GM12878 (cell line): ENCODE measurements at regions of chr16 and their contacts with region 1.

Region 1: GRCh38 chr16:57591086-57591869 is 37.2 kb upstream of the ADGRG1 start:
- DNase-seq: no peak
- ATAC-seq: peak; percentile 88
- H3K4me3 ChIP-seq: no peak overlapping the region
- H3K27ac ChIP-seq: no peak overlapping the region
- H3K4me1 ChIP-seq: peaks cover 23% of the 10 kb centered on the region
- H3K27me3 ChIP-seq: no peaks in the 10 kb centered on the region
- CTCF ChIP-seq: peak; percentile 91 to 94 (median 94)
- EP300 ChIP-seq: peak; percentile 62 to 68; a peak in 2 of 4 replicates
- POLR2A ChIP-seq: 0 out of 2 replicates have a peak, but pooled peaks have one; percentile 27
- RAD21 ChIP-seq: peak; percentile 76

Region 2: DNA sequence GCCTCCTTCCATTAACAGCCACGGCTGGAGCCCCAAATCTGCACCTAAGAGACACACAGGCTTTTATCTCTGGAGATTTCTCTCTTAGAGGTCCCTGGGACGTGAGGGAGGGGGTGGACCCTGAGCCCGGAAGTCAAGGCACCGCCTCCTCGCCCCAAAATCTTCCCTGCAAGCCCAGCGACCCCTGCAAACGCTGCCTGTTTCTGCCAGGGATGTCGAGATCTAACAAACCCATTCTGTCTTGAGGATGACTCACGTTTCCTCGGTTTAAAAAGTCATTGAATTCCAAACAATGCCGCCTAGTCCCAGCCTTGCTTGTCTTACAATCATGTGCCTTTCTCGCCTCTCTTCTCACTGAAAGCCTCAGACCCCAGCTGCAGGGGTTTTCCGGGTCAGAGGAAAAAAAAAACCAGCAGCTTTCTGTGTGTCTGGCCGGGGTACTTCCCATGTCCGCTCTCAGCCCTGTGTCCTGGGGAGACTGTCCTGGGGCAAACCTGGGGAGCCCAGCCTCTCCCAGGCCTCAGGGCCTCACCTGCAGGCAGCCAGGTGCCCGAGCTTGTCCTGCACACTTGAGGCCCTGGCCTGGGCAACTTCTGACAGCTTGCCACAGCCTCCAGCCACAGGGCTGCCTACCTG is 330.9 kb before region 1 on chr16:
- CTCF ChIA-PET with region 1: no interaction called
- POLR2A ChIA-PET with region 1: no interaction called
- RAD21 ChIA-PET with region 1: no interaction called
- SMC1A ChIA-PET with region 1: no interaction called
- in situ Hi-C with region 1: no loop called
- intact Hi-C with region 1: no loop called
- DNase-seq: peak; percentile 42
- ATAC-seq: peak; percentile 90
- H3K4me3 ChIP-seq: peak overlapping the region; percentile 35; the same call in 1 of the 2 replicates
- H3K27ac ChIP-seq: peak overlapping the region; percentile 16
- H3K4me1 ChIP-seq: peaks cover 3% of the 10 kb centered on the region
- H3K27me3 ChIP-seq: no peaks in the 10 kb centered on the region
- CTCF ChIP-seq: no peak
- EP300 ChIP-seq: no peak
- POLR2A ChIP-seq: no peak
- RAD21 ChIP-seq: no peak

Region 3: GRCh38 chr16:57535680-57536305 is 55.5 kb before region 1 on chr16:
- CTCF ChIA-PET with region 1: interaction called, 11 read pairs
- POLR2A ChIA-PET with region 1: interaction called, 5 read pairs
- RAD21 ChIA-PET with region 1: interaction called, 7 read pairs
- SMC1A ChIA-PET with region 1: interaction called, 3 read pairs
- in situ Hi-C with region 1: no loop called
- intact Hi-C with region 1: no loop called
- DNase-seq: no peak
- ATAC-seq: peak; percentile 82
- H3K4me3 ChIP-seq: peak overlapping the region; percentile 88
- H3K27ac ChIP-seq: peak overlapping the region; percentile 85
- H3K4me1 ChIP-seq: peaks cover 63% of the 10 kb centered on the region
- H3K27me3 ChIP-seq: no peaks in the 10 kb centered on the region
- CTCF ChIP-seq: 0 out of 6 replicates have a peak, but pooled peaks of 2 of the 3 experiments have one; percentile 16 to 24
- EP300 ChIP-seq: no peak
- POLR2A ChIP-seq: no peak
- RAD21 ChIP-seq: no peak

Region 4: GRCh38 chr16:57564571-57565270 is 26.6 kb before region 1 on chr16:
- CTCF ChIA-PET with region 1: no interaction called
- POLR2A ChIA-PET with region 1: no interaction called
- RAD21 ChIA-PET with region 1: no interaction called
- SMC1A ChIA-PET with region 1: no interaction called
- in situ Hi-C with region 1: no loop called
- intact Hi-C with region 1: no loop called
- DNase-seq: no peak
- ATAC-seq: no peak
- H3K4me3 ChIP-seq: no peak overlapping the region
- H3K27ac ChIP-seq: no peak overlapping the region
- H3K4me1 ChIP-seq: no peaks in the 10 kb centered on the region
- H3K27me3 ChIP-seq: no peaks in the 10 kb centered on the region; a peak in 1 of 4 replicates
- CTCF ChIP-seq: no peak
- EP300 ChIP-seq: no peak
- POLR2A ChIP-seq: no peak
- RAD21 ChIP-seq: no peak

Region 5: DNA sequence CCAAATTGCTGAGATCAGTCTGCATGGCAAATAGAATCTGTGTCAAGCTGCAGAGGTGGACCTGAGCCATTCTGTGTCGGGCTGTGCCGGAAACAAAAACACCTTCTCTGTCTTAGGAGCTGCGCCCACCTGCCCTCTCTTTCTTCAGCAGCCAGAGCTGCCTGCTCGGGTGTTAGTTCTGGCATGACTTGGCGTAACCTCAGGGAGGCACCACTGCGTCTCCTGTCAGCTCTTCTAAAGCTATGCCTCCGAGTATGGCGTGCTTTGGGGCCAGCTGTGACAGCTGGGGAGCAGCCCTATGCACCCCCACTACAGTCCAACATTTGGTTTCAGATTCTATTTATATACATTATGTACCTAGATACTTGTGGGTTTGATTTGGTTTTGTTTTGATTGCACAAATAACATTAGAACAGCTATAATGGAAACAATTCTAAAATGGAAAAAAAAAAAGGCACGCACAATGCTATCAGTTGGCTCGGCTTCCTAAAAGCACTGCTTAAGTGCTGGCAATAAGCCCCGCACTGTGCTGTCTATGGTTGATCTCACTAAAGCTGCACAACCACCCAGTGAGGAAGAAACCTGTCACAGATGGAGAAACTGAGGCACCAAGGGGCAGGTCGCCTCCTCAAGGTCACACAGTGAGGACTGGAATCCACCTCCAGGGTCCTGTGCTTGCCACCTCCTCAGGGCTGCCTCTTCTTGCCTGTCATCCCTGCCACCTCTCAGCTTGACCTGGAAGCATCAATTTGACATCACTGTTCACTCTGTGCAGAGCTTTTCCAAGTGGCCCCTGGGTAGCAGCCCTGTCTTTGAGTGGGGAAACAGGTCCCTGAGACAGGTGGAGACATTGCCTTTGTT is 18.5 kb after region 1 on chr16:
- CTCF ChIA-PET with region 1: interaction called, 197 read pairs
- POLR2A ChIA-PET with region 1: interaction called, 8 read pairs
- RAD21 ChIA-PET with region 1: interaction called, 40 read pairs
- SMC1A ChIA-PET with region 1: interaction called, 50 read pairs
- in situ Hi-C with region 1: no loop called
- intact Hi-C with region 1: no loop called
- DNase-seq: peak; percentile 83
- ATAC-seq: peak; percentile 92
- H3K4me3 ChIP-seq: peak overlapping the region; percentile 30; the same call in 1 of the 2 replicates
- H3K27ac ChIP-seq: peak overlapping the region; percentile 87
- H3K4me1 ChIP-seq: peaks cover 37% of the 10 kb centered on the region
- H3K27me3 ChIP-seq: no peaks in the 10 kb centered on the region
- CTCF ChIP-seq: peak; percentile 40 to 55 (median 41); a peak in 4 of 6 replicates
- EP300 ChIP-seq: peak; percentile 90 to 99; a peak in 3 of 4 replicates
- POLR2A ChIP-seq: peak; percentile 42; the same call in 1 of the 2 replicates
- RAD21 ChIP-seq: peak; percentile 67

Region 6: DNA sequence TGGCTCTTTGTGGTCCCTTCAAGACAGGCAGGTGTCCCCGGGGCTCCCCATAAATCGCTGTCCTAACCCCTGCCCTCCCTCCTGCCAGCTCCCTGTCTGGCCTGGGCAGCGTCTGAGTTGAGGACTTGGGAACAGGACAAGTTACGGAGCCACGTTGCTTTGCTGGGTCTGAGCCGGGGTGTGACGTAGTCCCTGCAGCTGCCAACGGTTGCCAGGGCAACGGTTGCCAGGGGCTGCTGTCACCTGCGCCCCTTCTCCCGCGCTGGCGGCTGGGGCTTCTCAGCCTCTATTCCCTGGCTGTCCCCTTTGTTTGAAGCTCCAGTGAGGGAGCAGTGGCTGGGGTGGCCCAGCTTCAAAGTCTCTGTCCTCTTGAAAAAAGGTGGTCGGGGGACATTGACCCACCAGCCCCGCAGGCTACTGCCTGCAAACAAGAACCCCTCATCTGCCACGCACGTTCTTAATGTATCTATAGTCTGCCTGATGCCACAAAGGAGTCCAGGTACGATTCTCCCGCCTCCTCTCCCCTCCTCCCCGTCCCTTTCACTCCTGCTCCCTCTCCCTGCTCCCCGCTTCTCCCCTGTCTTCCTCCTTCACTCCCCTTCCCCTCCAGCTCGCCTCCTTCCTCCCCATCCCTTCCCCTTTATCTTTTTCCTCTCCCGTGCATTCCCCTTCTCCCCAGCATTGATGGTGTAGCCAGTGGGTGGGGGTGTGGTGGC is 48.1 kb after region 1 on chr16:
- CTCF ChIA-PET with region 1: interaction called, 10 read pairs
- POLR2A ChIA-PET with region 1: no interaction called
- RAD21 ChIA-PET with region 1: interaction called, 4 read pairs
- SMC1A ChIA-PET with region 1: interaction called, 4 read pairs
- in situ Hi-C with region 1: no loop called
- intact Hi-C with region 1: no loop called
- DNase-seq: no peak
- ATAC-seq: peak; percentile 28; the same call in 1 of the 3 replicates
- H3K4me3 ChIP-seq: no peak overlapping the region
- H3K27ac ChIP-seq: no peak overlapping the region
- H3K4me1 ChIP-seq: no peaks in the 10 kb centered on the region
- H3K27me3 ChIP-seq: peaks cover 0 to 6% of the 10 kb centered on the region in 2 experiments; a peak in 3 of 4 replicates
- CTCF ChIP-seq: no peak
- EP300 ChIP-seq: no peak
- POLR2A ChIP-seq: no peak
- RAD21 ChIP-seq: no peak

Region 7: GRCh38 chr16:57648590-57649442 is 57.5 kb after region 1 on chr16:
- CTCF ChIA-PET with region 1: interaction called, 149 read pairs
- POLR2A ChIA-PET with region 1: interaction called, 3 read pairs
- RAD21 ChIA-PET with region 1: interaction called, 61 read pairs
- SMC1A ChIA-PET with region 1: interaction called, 43 read pairs
- in situ Hi-C with region 1: no loop called
- intact Hi-C with region 1: loop called (anchors 1 kb)
- DNase-seq: peak; percentile 52
- ATAC-seq: peak; percentile 83
- H3K4me3 ChIP-seq: no peak overlapping the region
- H3K27ac ChIP-seq: peak overlapping the region; percentile 13; the same call in 1 of the 2 replicates
- H3K4me1 ChIP-seq: peaks cover 19% of the 10 kb centered on the region
- H3K27me3 ChIP-seq: no peaks in the 10 kb centered on the region
- CTCF ChIP-seq: peak; percentile 100; a peak in 5 of 6 replicates
- EP300 ChIP-seq: no peak
- POLR2A ChIP-seq: no peak
- RAD21 ChIP-seq: peak; percentile 99

Region 8: GRCh38 chr16:57720142-57720575 is 128.9 kb after region 1 on chr16:
- CTCF ChIA-PET with region 1: no interaction called
- POLR2A ChIA-PET with region 1: no interaction called
- RAD21 ChIA-PET with region 1: interaction called, 3 read pairs
- SMC1A ChIA-PET with region 1: interaction called, 5 read pairs
- in situ Hi-C with region 1: no loop called
- intact Hi-C with region 1: loop called (anchors 1 kb)
- DNase-seq: no peak
- ATAC-seq: peak; percentile 96
- H3K4me3 ChIP-seq: no peak overlapping the region
- H3K27ac ChIP-seq: no peak overlapping the region
- H3K4me1 ChIP-seq: no peaks in the 10 kb centered on the region
- H3K27me3 ChIP-seq: peaks cover 0 to 2% of the 10 kb centered on the region in 2 experiments; a peak in 2 of 4 replicates
- CTCF ChIP-seq: peak; percentile 49 to 68 (median 60)
- EP300 ChIP-seq: no peak
- POLR2A ChIP-seq: no peak
- RAD21 ChIP-seq: peak; percentile 60

Region 9: GRCh38 chr16:58000706-58001676 is 409.7 kb after region 1 on chr16 and contains the start of gene USB1:
- CTCF ChIA-PET with region 1: interaction called, 3 read pairs
- POLR2A ChIA-PET with region 1: no interaction called
- RAD21 ChIA-PET with region 1: no interaction called
- SMC1A ChIA-PET with region 1: no interaction called
- in situ Hi-C with region 1: loop called (anchors 10 kb)
- intact Hi-C with region 1: loop called (anchors 5 kb)
- DNase-seq: peak; percentile 56
- ATAC-seq: peak; percentile 91
- H3K4me3 ChIP-seq: peak within 1 kb of the TSS; percentile 98
- H3K27ac ChIP-seq: peak within 1 kb of the TSS; percentile 78
- H3K4me1 ChIP-seq: peaks cover 13% of the 10 kb centered on the region
- H3K27me3 ChIP-seq: no peaks in the 10 kb centered on the region
- CTCF ChIP-seq: peak; percentile 42 to 75 (median 57)
- EP300 ChIP-seq: no peak
- POLR2A ChIP-seq: peak; percentile 88
- RAD21 ChIP-seq: peak; percentile 56; the same call in 1 of the 2 replicates
- polyA plus RNA-seq, gene USB1: 7.9 to 8.7 TPM